Activated T-helper 1 cell treated with anti-CD3 and anti-CD28 coated beads, Interleukin-12 subunit alpha, Interleukin-12 subunit beta, Interleukin-2, Interleukin-4 antibody, amounts not matched to agents 30 ng/mL and 10 ng/mL and 1 ng/mL, durations not matched to agents 14 hours and 24 hours and 36 hours (primary cell): ENCODE measurements at regions of chr2 and their contacts with region 1.

Region 1: DNA sequence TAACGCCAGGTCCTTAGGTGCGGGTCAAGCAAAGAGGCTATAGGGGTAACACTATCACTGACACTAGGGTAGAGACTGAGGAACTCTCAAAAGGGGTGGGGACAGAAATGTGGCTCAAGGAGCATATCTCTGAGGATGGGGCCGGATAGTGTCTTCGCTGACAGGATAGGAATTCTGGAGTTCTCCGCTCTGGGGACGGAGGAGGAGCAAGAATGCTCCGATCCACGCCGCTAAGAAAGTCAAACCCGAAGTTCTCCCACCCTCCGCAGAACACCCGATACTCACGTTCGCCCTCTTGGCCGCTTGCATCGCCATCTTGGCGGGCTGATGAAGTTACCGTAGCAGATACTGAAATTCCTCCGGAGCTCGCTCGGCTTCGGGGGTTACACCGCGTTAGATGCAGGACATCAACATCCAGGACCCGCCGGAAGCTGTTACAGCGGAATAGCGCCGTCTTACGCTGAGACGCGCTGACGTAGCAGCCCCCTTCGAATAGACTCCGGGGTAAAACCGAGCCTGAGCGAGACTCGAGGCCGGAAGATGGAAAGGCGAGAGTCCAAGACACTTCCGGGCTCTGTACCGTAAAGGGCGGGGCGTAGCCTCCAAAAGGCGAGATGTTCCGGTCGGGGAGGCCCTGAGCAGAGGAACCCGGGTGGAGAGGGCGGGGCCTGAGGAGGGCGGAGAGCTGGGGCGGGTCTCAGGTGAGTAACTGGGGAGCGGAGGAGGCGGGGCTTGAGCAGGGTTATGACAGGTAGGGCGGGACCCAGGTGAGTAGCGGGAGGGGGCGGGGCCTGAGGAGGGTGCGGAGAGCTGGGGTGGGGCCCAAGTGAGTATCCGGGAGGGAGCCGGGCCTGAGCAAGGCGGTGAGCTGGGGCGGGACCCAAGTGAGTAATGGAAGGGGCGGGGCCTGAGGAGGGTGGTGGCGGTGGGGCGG is at the start of gene SF3B6:
- DNase-seq: peak; percentile 98
- H3K4me3 Mint-ChIP-seq: peak within 1 kb of the TSS; percentile 98
- H3K27ac Mint-ChIP-seq: peak within 1 kb of the TSS; percentile 94
- H3K4me1 Mint-ChIP-seq: peaks cover 33% of the 10 kb centered on the region
- H3K27me3 Mint-ChIP-seq: peaks cover 2% of the 10 kb centered on the region
- total RNA-seq, gene SF3B6: 128 and 145 TPM in 2 replicates

Region 2: GRCh38 chr2:23824777-23825212 is 251.4 kb before region 1 on chr2:
- intact Hi-C with region 1: loop called (anchors 2 kb)
- DNase-seq: no peak
- H3K4me3 Mint-ChIP-seq: no peak overlapping the region
- H3K27ac Mint-ChIP-seq: no peak overlapping the region
- H3K4me1 Mint-ChIP-seq: no peaks in the 10 kb centered on the region
- H3K27me3 Mint-ChIP-seq: no peaks in the 10 kb centered on the region

Region 3: DNA sequence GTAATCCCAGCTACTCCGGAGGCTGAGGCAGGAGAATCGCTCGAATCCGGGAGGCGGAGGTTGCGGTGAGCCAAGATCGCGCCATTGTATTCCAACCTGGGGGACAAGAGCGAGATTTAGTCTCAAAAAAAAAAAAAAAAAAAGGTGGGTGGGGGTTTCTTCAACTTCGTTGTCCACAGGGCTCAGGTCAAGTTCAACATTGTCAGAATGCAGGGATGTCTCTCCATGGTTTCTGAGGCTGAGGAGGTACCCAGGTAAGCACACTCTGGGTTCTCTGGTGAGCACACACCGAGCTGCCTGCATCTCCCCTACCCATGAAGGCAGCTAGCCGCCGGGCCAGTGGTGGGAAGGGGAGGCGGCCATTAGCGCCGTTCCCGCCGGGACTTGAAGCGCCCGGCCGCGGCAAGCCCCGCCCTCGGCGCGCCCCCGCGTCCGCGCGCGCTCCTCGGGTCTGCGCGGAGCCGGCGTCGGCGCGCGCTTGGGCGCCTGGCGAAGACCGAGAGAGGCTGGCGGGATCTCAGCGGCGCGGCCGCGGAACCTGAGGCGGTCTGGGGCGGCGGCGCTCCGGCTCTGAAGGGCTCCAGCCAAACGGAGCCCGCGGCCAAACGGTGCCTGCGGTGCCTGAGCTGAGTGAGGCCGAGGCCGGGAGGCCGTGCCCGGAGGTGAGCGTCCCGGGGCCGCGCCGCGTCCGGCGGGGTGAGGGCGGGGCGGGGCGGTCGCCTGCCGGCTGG is 136.0 kb before region 1 on chr2 and contains the start of gene UBXN2A:
- intact Hi-C with region 1: loop called (anchors 1 kb)
- DNase-seq: peak; percentile 72
- H3K4me3 Mint-ChIP-seq: peak within 1 kb of the TSS; percentile 89
- H3K27ac Mint-ChIP-seq: peak within 1 kb of the TSS; percentile 74
- H3K4me1 Mint-ChIP-seq: peaks cover 26% of the 10 kb centered on the region
- H3K27me3 Mint-ChIP-seq: peaks cover 21% of the 10 kb centered on the region
- total RNA-seq, gene UBXN2A: 11.4 and 13.0 TPM in 2 replicates

Region 4: GRCh38 chr2:24046930-24047702 is 29.1 kb before region 1 on chr2 and contains the start of gene WDCP:
- intact Hi-C with region 1: loop called (anchors 1 kb)
- DNase-seq: peak; percentile 92
- H3K4me3 Mint-ChIP-seq: peak within 1 kb of the TSS; percentile 94
- H3K27ac Mint-ChIP-seq: peak within 1 kb of the TSS; percentile 86
- H3K4me1 Mint-ChIP-seq: peaks cover 24% of the 10 kb centered on the region
- H3K27me3 Mint-ChIP-seq: no peaks in the 10 kb centered on the region
- total RNA-seq, gene WDCP: 21.9 and 23.1 TPM in 2 replicates

Region 5: GRCh38 chr2:24123195-24123921 is 47.2 kb after region 1 on chr2 and contains the starts of genes FAM228B and PFN4:
- intact Hi-C with region 1: loop called (anchors 2 kb)
- DNase-seq: peak; percentile 66
- H3K4me3 Mint-ChIP-seq: peak within 1 kb of the TSS; percentile 85
- H3K27ac Mint-ChIP-seq: peak within 1 kb of the TSS; percentile 86
- H3K4me1 Mint-ChIP-seq: peaks cover 15% of the 10 kb centered on the region
- H3K27me3 Mint-ChIP-seq: no peaks in the 10 kb centered on the region
- total RNA-seq, gene FAM228B: 3.1 and 4.8 TPM in 2 replicates
- total RNA-seq, gene PFN4: not detected in 2 replicates

Region 6: GRCh38 chr2:24360050-24360962 is 284.1 kb after region 1 on chr2 and contains the start of gene ITSN2:
- intact Hi-C with region 1: loop called (anchors 1 kb)
- DNase-seq: peak; percentile 81
- H3K4me3 Mint-ChIP-seq: peak within 1 kb of the TSS; percentile 91
- H3K27ac Mint-ChIP-seq: peak within 1 kb of the TSS; percentile 93
- H3K4me1 Mint-ChIP-seq: peaks cover 29% of the 10 kb centered on the region
- H3K27me3 Mint-ChIP-seq: no peaks in the 10 kb centered on the region
- total RNA-seq, gene ITSN2: 52.9 and 57.1 TPM in 2 replicates

Region 7: DNA sequence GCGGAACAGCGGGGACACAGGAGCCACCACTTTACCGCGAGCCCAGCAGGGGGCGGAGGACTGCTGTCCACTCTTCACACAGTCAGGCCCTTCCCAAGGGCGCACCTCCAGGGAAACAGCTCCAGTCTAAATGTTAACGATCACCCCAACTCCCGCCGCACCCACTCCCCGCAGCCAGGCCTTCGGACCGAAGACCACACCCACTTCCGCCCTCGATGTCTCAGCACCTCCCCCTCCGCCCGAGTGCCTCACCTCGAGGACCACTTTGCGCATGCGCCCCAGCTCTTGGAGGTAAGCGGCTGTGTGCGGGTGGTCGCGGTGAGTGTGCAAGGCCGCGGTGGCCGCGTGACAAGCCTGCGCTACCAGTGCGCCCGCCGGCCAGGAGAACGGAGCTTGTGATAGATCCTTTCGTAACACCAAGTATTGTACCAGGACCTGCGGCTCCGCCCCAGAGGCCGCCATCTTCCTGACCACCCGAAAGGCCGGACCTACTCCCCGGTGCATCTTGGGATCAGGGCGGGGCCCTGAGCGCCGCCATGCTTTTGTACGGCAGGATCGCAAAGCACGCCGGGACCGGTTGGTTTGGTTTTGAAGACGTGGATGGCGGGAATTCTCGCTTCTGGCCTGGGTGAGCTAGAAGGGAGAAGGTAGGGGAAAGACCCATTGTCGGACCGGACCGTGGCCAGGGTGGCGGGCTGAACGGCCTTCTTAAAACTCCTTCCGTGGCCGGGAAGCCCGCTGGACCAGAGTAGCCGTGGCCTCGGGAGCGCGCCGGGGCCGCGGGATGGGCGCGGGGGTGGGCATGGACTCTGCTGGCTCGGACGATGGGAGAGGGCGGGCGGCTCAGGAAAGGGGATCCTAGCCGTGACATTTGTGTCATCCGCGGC is 716.9 kb after region 1 on chr2 and contains the starts of genes CENPO and PTRHD1:
- intact Hi-C with region 1: loop called (anchors 5 kb)
- DNase-seq: peak; percentile 92
- H3K4me3 Mint-ChIP-seq: peak within 1 kb of the TSS; percentile 95
- H3K27ac Mint-ChIP-seq: peak within 1 kb of the TSS; percentile 99
- H3K4me1 Mint-ChIP-seq: peaks cover 47% of the 10 kb centered on the region
- H3K27me3 Mint-ChIP-seq: peaks cover 1% of the 10 kb centered on the region
- total RNA-seq, gene CENPO: 44.7 and 48.3 TPM in 2 replicates
- total RNA-seq, gene PTRHD1: 16.5 and 17.3 TPM in 2 replicates

Region 8: GRCh38 chr2:24830371-24830770 is 754.2 kb after region 1 on chr2:
- intact Hi-C with region 1: no loop called
- DNase-seq: no peak
- H3K4me3 Mint-ChIP-seq: no peak overlapping the region
- H3K27ac Mint-ChIP-seq: no peak overlapping the region
- H3K4me1 Mint-ChIP-seq: peaks cover 20% of the 10 kb centered on the region
- H3K27me3 Mint-ChIP-seq: no peaks in the 10 kb centered on the region

Region 9: DNA sequence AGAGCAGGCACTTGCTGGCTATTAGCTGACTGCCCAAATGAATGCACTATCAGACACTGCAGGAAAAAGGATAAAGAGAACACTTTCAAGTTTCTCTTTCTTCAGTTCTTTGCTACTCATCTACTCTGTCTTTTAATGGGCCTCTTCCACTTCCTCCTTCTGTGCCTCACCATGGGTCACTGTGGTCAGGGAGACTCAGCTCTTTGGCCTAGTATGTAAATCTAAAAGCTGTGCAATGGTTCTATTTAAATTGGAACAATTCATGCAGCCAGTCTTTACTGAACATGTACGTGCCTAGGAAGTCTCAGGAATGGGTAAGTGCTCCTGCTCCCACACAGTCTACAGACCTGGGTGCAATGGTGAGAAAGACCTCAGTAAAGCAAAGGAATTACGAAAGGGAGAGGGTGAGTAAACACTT is 1344.6 kb after region 1 on chr2:
- intact Hi-C with region 1: no loop called
- DNase-seq: no peak
- H3K4me3 Mint-ChIP-seq: no peak overlapping the region
- H3K27ac Mint-ChIP-seq: no peak overlapping the region
- H3K4me1 Mint-ChIP-seq: peaks cover 19% of the 10 kb centered on the region
- H3K27me3 Mint-ChIP-seq: no peaks in the 10 kb centered on the region